ENCODE measurements at regions of chr13 and their contacts with region 1.

Region 1: DNA sequence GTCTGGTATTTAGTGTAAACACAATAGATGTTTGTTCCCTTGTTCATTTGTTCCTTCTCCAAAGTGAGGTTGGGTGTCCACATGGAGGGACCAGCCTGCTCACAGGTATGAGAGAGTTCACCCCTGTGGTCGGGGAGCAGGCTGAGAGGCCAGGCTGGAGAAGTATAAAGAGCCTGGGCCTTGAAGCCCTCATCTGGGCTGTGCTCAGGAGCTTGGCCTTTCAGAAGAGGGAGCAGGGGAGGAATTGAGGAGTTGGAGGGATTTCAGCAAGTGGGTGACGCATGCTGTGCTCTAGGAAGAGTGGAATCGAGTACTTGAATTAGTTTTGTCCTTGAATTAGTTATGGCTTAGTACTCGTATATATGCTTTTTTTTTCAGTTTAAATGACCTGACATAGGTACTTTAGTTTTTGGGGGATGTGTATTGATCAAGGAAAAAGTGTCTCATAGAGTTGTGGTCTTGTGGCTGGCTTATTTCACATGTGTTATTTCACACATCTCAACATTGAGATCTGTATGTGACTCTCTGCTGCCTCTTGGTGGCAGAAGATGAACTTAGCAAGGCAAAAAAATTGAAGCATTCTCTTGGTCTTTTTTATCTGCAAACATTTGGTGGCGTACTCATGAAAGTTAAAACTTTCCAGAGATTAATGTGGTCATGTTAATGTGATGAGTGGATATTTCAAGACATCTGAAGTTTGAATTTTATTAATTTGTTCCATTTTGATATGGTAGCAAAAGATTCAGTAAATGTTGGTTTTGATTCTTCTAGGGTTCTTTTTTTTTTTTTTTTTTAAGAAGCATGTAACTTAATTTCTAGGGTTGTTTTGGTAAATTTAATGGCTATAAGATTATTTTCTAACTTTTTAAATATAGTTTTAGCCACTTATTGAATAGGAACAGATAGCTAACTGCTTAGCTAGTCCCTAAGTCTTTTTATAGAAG is 54.3 kb downstream of the SLAIN1 start:
- DNase-seq: peak; percentile 2 to 59 (median 41)
- H3K4me3 ChIP-seq: no peak overlapping the region
- H3K4me3 Mint-ChIP-seq: no peak overlapping the region
- H3K27ac ChIP-seq: no peak overlapping the region
- H3K27ac Mint-ChIP-seq: peak overlapping the region in 3 of 8 donors; percentile 2 to 64 (median 59)
- H3K4me1 ChIP-seq: peaks cover 4% of the 10 kb centered on the region
- H3K4me1 Mint-ChIP-seq: peaks cover 10 to 30% (median 24%) of the 10 kb centered on the region in 3 donors
- H3K27me3 ChIP-seq: no peaks in the 10 kb centered on the region
- H3K27me3 Mint-ChIP-seq: no peaks in the 10 kb centered on the region

Region 2: DNA sequence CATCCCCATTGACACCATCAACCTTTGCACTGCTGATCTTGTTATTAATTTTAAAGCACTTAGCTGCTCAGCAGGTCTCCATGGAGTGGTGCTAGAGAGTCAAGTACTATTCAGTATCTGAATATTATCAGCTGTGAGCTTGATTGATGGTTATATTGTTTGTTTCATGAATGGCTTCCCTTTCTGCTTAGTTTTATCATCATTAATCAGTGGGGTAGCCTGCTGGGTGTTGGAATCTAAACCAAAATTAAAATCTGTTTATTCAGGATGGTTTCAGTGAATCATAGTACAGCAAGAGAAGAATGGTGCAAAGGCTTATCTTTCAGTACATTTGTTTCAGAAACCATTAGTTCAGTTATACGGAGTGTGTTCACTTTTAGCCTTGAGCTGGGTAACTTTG is 258.8 kb before region 1 on chr13:
- CTCF ChIA-PET with region 1: interaction called, 13 read pairs
- POLR2A ChIA-PET with region 1: no interaction called
- DNase-seq: no peak
- H3K4me3 ChIP-seq: no peak overlapping the region
- H3K4me3 Mint-ChIP-seq: no peak overlapping the region
- H3K27ac ChIP-seq: no peak overlapping the region
- H3K27ac Mint-ChIP-seq: no peak overlapping the region
- H3K4me1 ChIP-seq: no peaks in the 10 kb centered on the region
- H3K4me1 Mint-ChIP-seq: no peaks in the 10 kb centered on the region
- H3K27me3 ChIP-seq: no peaks in the 10 kb centered on the region
- H3K27me3 Mint-ChIP-seq: peaks cover 2 to 13% of the 10 kb centered on the region in 2 donors

Region 3: GRCh38 chr13:77595166-77595810 is 156.5 kb before region 1 on chr13:
- CTCF ChIA-PET with region 1: interaction called, 22 read pairs
- POLR2A ChIA-PET with region 1: no interaction called
- DNase-seq: no peak
- H3K4me3 ChIP-seq: no peak overlapping the region
- H3K4me3 Mint-ChIP-seq: no peak overlapping the region
- H3K27ac ChIP-seq: no peak overlapping the region
- H3K27ac Mint-ChIP-seq: no peak overlapping the region
- H3K4me1 ChIP-seq: no peaks in the 10 kb centered on the region
- H3K4me1 Mint-ChIP-seq: no peaks in the 10 kb centered on the region
- H3K27me3 ChIP-seq: no peaks in the 10 kb centered on the region
- H3K27me3 Mint-ChIP-seq: peaks cover 10 to 41% of the 10 kb centered on the region in 2 donors

Region 4: GRCh38 chr13:77620138-77620537 is 131.6 kb before region 1 on chr13:
- CTCF ChIA-PET with region 1: no interaction called
- POLR2A ChIA-PET with region 1: no interaction called
- DNase-seq: no peak
- H3K4me3 ChIP-seq: no peak overlapping the region
- H3K4me3 Mint-ChIP-seq: no peak overlapping the region
- H3K27ac ChIP-seq: no peak overlapping the region
- H3K27ac Mint-ChIP-seq: no peak overlapping the region
- H3K4me1 ChIP-seq: no peaks in the 10 kb centered on the region
- H3K4me1 Mint-ChIP-seq: no peaks in the 10 kb centered on the region
- H3K27me3 ChIP-seq: no peaks in the 10 kb centered on the region
- H3K27me3 Mint-ChIP-seq: peaks cover 0 to 25% of the 10 kb centered on the region in 2 donors

Region 5: DNA sequence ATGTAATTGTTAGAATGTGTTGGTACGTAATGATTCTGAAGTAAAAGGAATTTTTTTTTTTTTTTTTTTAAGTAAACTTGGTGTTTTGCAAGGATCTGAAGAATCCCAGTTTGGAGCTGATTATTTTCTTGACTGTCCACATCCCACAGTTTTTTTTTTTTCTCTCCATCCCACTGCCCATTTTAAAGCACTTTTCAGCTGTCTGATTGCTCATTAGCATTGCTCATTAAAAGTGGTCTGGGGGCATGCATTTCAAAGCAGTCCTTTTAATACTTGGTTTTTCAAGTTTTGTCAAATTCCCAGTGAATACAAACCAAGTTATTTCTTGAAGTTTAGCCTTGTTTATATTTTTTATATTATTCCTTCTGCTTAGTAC is 10.2 kb before region 1 on chr13:
- CTCF ChIA-PET with region 1: no interaction called
- POLR2A ChIA-PET with region 1: no interaction called
- DNase-seq: no peak
- H3K4me3 ChIP-seq: no peak overlapping the region
- H3K4me3 Mint-ChIP-seq: no peak overlapping the region
- H3K27ac ChIP-seq: no peak overlapping the region
- H3K27ac Mint-ChIP-seq: peak overlapping the region in 1 of 8 donors; percentile 6
- H3K4me1 ChIP-seq: no peaks in the 10 kb centered on the region
- H3K4me1 Mint-ChIP-seq: peaks cover 12 to 32% (median 26%) of the 10 kb centered on the region in 3 donors
- H3K27me3 ChIP-seq: no peaks in the 10 kb centered on the region
- H3K27me3 Mint-ChIP-seq: no peaks in the 10 kb centered on the region